ENCODE measurements at regions of chr12 and their contacts with region 1.

Region 1: GRCh38 chr12:47837190-47838171 is 17.8 kb upstream of the HDAC7 start:
- DNase-seq: peak; percentile 70 to 84 (median 81)
- H3K4me3 ChIP-seq: no peak overlapping the region
- H3K27ac ChIP-seq: peak overlapping the region in 1 of 2 donors; percentile 15
- H3K4me1 ChIP-seq: peaks cover 4% of the 10 kb centered on the region
- H3K27me3 ChIP-seq: no peaks in the 10 kb centered on the region
- CTCF ChIP-seq: peak; percentile 67 to 92 (median 91)
- EP300 ChIP-seq: no peak
- POLR2A ChIP-seq: no peak

Region 2: DNA sequence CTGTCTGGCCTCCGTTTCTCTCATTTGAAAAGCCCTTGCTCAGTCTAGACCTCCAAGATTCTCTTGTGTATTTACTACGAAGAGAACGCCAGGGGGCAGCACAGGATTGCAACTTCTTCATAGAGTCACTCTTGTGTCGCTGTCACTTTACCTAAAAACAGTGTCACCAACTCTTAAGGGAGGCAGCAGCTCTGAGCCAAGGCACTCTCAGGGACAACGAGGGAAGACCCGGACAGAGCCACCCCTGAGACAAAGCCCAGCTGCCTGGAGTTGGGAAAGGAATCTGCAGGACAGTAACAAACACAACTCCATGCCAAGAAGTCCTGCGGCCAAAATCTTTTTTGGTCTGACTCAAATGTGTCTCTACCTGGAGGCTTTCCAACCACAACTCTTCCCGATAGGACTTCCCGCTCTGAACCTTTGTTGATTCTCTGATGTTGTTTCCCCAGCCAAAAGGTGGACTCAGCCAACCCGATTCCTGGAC is 122.0 kb before region 1 on chr12:
- intact Hi-C with region 1: loop called in 1 of 4 experiments (anchors 5 kb)
- DNase-seq: peak; percentile 81 to 92 (median 83)
- H3K4me3 ChIP-seq: no peak overlapping the region
- H3K27ac ChIP-seq: peak overlapping the region; percentile 60 to 84
- H3K4me1 ChIP-seq: peaks cover 39% of the 10 kb centered on the region
- H3K27me3 ChIP-seq: no peaks in the 10 kb centered on the region
- CTCF ChIP-seq: peak; percentile 60 to 97 (median 89)
- EP300 ChIP-seq: no peak
- POLR2A ChIP-seq: no peak

Region 3: DNA sequence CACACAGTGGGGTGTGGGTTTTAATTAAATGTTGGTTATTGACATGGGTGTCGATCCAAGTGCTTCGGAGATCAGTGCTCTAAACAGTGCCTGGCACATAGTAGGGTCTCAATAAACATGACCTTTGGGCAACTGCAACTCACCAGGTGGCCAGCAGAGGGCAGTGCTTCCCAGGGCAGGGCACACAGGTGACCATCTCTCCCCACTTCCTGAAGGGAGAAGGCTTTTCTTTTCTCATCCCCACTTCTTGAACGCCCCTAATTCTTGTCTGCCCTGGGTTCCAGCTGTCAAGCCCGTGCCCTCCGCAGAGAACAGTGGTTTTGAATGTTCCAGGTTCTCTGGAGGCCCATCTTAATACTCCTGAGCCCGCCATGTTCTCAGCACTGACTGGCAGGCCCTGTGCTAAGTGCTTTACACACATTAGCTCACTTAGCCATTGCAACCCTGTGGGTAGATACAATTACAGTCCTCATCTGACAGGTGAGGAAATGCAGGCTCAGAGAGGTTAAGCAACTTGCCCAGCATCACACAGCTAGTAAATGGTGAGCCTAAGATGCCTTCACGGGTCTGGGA is 95.1 kb before region 1 on chr12:
- intact Hi-C with region 1: loop called in 2 of 4 experiments (anchors 2 to 10 kb)
- DNase-seq: peak in 4 of 5 donors; percentile 68 to 77 (median 74)
- H3K4me3 ChIP-seq: no peak overlapping the region
- H3K27ac ChIP-seq: peak overlapping the region in 1 of 2 donors; percentile 51
- H3K4me1 ChIP-seq: peaks cover 12% of the 10 kb centered on the region
- H3K27me3 ChIP-seq: no peaks in the 10 kb centered on the region
- CTCF ChIP-seq: peak; percentile 65 to 95 (median 93)
- EP300 ChIP-seq: no peak
- POLR2A ChIP-seq: no peak

Region 4: DNA sequence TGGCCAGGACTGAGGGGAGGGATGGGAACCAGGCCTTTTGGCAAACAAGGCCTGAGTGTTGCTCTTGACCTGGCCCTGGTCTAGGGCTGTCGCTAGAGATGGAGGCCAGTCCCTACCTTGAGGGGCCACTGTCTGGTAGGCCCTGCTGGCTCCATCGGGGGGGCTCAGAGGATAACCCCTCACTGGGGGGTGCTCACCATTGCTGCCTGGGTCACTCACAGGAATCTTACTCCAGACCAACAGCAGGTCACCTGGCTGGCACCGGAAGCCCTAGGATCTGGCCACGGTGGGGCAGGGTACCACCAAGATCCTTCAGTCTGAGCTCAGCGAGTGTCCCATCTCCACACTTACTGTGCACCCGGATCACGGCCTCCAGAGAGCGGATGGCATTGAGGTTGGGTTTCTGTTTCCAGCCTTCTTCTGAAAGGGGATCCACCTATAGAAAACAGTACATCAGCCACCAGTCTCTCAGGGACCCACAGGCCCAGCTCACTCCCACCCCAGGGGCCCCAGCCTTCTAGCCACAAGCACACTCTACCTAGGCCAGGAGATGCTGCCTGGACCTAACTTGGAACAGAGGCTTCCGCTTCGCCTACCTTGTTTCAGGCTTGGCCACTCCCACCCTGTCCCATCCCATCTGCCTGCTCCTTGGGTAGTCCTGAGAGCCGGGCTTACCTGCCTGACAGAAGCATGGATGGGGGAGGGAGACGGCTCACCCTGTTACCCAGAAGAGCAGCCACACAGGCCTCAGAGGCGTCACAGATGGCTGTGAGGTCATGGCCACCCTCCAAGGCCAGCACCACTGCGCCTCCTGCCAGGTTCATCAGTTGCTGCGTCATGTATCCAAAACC is 52.2 kb before region 1 on chr12:
- intact Hi-C with region 1: loop called (anchors 5 to 10 kb)
- DNase-seq: peak; percentile 69 to 82 (median 79)
- H3K4me3 ChIP-seq: no peak overlapping the region
- H3K27ac ChIP-seq: peak overlapping the region; percentile 46 to 70
- H3K4me1 ChIP-seq: no peaks in the 10 kb centered on the region
- H3K27me3 ChIP-seq: no peaks in the 10 kb centered on the region
- CTCF ChIP-seq: no peak
- EP300 ChIP-seq: no peak
- POLR2A ChIP-seq: no peak

Region 5: DNA sequence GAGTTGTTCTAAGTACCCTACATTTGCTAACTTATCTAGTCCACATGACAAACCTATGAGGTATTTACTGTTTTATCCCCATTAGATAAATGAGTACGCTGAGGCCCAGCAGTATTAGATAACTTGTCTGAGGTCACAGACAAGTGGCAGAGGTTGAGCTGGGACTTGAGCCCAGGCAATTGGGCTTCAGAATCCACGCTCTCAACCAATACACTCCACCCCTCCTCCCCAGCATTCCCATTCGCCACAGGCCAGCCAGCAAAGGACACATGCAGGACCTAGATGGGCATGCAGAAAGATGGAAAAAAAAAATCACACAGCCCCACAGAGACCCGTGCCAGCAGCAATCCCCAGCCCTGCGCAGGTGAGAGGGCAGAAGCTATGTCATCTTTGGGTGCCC is 30.1 kb before region 1 on chr12:
- intact Hi-C with region 1: loop called in 2 of 4 experiments (anchors 2 to 5 kb)
- DNase-seq: no peak
- H3K4me3 ChIP-seq: no peak overlapping the region
- H3K27ac ChIP-seq: peak overlapping the region in 1 of 2 donors; percentile 28
- H3K4me1 ChIP-seq: peaks cover 45% of the 10 kb centered on the region
- H3K27me3 ChIP-seq: no peaks in the 10 kb centered on the region
- CTCF ChIP-seq: no peak
- EP300 ChIP-seq: no peak
- POLR2A ChIP-seq: no peak

Measured in ovary (tissue), 10 donors.